ENCODE measurements at regions of chr19 and their contacts with region 1.

Region 1: DNA sequence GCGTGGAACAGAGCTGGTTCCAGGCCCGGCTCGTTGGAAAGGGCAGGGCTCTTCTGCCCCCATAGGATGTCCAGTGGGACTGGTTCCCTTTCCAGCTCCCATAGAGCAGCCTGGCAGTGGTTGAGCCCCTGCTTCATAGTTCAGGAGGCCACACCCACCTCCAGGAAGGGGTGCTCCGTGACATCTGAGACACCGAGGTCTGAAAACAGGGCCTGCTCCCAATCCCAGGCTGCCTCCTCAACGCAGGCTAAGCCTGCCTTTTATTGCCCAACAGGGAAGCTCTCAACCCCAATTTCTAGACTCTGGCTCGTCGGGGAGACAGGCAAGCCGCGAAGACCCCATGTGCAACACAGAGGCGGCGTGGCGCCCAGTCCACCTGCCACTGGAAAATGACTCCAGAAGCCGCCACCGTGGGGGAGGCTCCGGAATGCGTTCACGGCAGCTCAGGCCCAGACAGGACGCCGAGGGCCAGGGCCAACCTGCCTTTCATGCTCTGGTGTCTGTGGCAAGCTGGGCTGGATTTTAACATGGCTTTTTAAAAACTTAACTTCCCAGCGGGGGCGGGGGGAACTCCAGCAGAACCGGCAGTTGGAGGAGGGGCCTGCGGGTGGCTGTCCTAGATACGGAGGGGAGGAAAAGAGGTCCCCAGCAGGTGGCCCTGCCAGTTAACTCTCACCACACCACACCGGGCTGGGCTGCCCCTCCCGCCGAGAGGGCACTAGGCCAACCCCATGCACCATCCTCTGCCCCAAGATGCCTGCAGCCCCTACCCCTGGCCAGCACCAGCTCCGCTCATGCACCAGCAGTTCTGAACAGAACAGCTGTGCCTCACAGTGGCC is 17.9 kb upstream of the TINCR start:
- DNase-seq: peak; percentile 46
- H3K4me3 ChIP-seq: no peak overlapping the region
- H3K27ac ChIP-seq: no peak overlapping the region
- H3K4me1 ChIP-seq: peaks cover 6% of the 10 kb centered on the region
- H3K27me3 ChIP-seq: no peaks in the 10 kb centered on the region
- CTCF ChIP-seq: no peak
- POLR2A ChIP-seq: no peak

Region 2: DNA sequence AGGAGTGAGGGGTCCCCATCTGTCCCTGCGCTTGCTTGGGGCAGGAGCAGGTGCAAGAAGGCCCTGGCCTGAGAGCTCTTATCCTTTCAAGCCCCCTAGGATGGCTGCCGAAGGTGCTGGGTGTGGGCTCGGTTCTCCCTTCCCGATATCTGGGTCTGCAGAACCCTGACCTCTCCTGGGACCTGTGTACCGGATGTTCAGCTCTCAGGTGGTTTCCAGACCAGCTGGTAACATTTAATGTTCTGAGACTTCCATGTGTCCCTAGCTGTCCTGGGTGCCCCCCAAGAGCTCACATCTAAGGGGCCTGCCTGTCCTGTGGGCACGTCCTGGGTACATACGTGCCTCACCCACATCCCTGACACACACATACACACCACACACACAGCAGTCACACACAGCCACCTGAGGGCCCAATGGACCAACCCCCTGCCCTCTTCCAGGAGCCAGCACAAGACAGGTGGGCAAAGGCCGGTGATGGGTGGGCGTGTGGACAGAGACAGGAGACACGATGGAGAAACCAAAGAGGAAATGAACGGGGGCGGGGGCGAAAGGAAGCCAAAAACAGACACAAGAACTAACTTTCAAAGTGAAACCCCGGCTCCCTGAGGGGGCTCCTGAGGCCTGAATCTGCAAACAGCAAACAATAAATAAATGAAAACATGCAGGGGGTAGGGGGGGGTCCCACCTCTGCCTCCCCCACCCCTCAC is 369.4 kb before region 1 on chr19:
- intact Hi-C with region 1: loop called (anchors 10 kb)
- DNase-seq: no peak
- H3K4me3 ChIP-seq: no peak overlapping the region
- H3K27ac ChIP-seq: no peak overlapping the region
- H3K4me1 ChIP-seq: no peaks in the 10 kb centered on the region
- H3K27me3 ChIP-seq: no peaks in the 10 kb centered on the region
- CTCF ChIP-seq: no peak
- POLR2A ChIP-seq: no peak

Region 3: GRCh38 chr19:5536337-5536894 is 49.3 kb before region 1 on chr19:
- intact Hi-C with region 1: no loop called
- DNase-seq: peak; percentile 68
- H3K4me3 ChIP-seq: peak overlapping the region in 1 of 2 donors; percentile 16
- H3K27ac ChIP-seq: no peak overlapping the region
- H3K4me1 ChIP-seq: no peaks in the 10 kb centered on the region
- H3K27me3 ChIP-seq: no peaks in the 10 kb centered on the region
- CTCF ChIP-seq: no peak
- POLR2A ChIP-seq: no peak

Measured in testis (tissue), 5 donors.